Right cardiac atrium (tissue), 5 donors: ENCODE measurements at regions of chr13 and their contacts with region 1.

Region 1: GRCh38 chr13:43915451-43915850 is 35.7 kb downstream of the LACC1 start:
- DNase-seq: no peak
- ATAC-seq: no peak
- H3K4me3 ChIP-seq: no peak overlapping the region
- H3K27ac ChIP-seq: no peak overlapping the region
- H3K4me1 ChIP-seq: peaks cover 5% of the 10 kb centered on the region
- H3K27me3 ChIP-seq: no peaks in the 10 kb centered on the region

Region 2: GRCh38 chr13:44022163-44022562 is 106.7 kb after region 1 on chr13:
- intact Hi-C with region 1: loop called in 1 of 4 experiments (anchors 10 kb)
- DNase-seq: no peak
- ATAC-seq: no peak
- H3K4me3 ChIP-seq: no peak overlapping the region
- H3K27ac ChIP-seq: no peak overlapping the region
- H3K4me1 ChIP-seq: no peaks in the 10 kb centered on the region
- H3K27me3 ChIP-seq: no peaks in the 10 kb centered on the region